ENCODE measurements at regions of chr18 and their contacts with region 1.

Region 1: DNA sequence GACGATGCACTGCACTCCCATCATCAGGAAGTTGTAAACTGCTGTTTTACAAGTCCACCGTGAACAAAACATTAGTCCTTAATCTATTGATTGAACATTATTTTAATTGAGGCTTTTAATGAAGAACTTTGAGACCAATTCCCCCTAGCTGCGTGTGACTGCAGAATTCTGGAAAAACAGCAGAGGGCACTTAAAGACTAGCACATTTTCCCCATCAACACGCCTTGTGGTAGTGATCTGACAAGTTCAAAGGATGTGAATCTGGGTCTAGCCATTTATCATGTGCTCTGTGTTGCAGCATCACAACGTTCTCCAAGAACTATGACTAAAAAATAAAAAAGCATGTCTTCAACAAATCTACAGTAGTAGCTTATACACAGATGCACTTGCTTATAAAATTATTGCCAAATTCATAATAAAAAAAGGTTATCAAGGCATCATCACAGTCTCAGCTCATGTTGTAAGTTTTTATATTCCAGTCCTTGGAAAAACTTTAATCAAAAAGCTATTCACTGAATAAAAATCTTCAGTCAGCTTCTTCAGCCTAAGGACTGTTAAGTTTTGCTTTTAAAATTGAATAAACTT is 35.8 kb downstream of the SKOR2 start:
- DNase-seq: peak; percentile 54
- H3K4me3 ChIP-seq: peak overlapping the region in 1 of 2 experiments; percentile 32; a peak in 1 of 4 replicates
- H3K27ac ChIP-seq: no peak overlapping the region
- H3K4me1 ChIP-seq: no peaks in the 10 kb centered on the region
- H3K27me3 ChIP-seq: no peaks in the 10 kb centered on the region
- CTCF ChIP-seq: peak; percentile 67
- EP300 ChIP-seq: no peak
- RAD21 ChIP-seq: peak; percentile 97

Region 2: GRCh38 chr18:47050468-47050867 is 165.2 kb before region 1 on chr18:
- CTCF ChIA-PET with region 1: interaction called, 12 read pairs
- POLR2A ChIA-PET with region 1: no interaction called
- DNase-seq: peak; percentile 42
- H3K4me3 ChIP-seq: no peak overlapping the region
- H3K27ac ChIP-seq: no peak overlapping the region
- H3K4me1 ChIP-seq: no peaks in the 10 kb centered on the region
- H3K27me3 ChIP-seq: no peaks in the 10 kb centered on the region
- CTCF ChIP-seq: peak; percentile 77
- EP300 ChIP-seq: no peak
- RAD21 ChIP-seq: peak; percentile 77

Region 3: DNA sequence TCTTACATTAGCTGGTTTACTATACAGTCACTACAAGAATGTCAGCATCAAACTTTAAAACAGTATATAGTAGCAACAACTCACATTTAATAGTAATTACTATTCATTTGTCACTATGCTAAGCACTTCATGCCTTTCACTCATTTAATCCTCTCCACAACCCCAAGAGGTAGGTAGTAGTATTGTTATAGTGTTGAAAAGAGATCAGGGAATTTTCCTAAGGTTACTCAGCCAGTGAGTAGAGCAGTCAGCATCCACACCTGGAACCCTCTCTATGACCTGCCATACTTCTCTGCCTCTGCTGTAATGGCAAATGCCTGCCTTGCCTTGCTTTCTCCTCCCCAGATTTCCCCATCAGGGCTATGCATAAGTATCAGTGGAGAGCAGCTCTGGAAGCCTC is 11.0 kb after region 1 on chr18:
- CTCF ChIA-PET with region 1: interaction called, 41 read pairs
- POLR2A ChIA-PET with region 1: no interaction called
- DNase-seq: no peak
- H3K4me3 ChIP-seq: no peak overlapping the region
- H3K27ac ChIP-seq: no peak overlapping the region
- H3K4me1 ChIP-seq: no peaks in the 10 kb centered on the region
- H3K27me3 ChIP-seq: no peaks in the 10 kb centered on the region; the same call in 1 of the 2 replicates
- CTCF ChIP-seq: no peak
- EP300 ChIP-seq: no peak
- RAD21 ChIP-seq: no peak

Region 4: GRCh38 chr18:47260120-47260923 is 44.7 kb after region 1 on chr18:
- CTCF ChIA-PET with region 1: interaction called, 19 read pairs
- POLR2A ChIA-PET with region 1: no interaction called
- DNase-seq: peak; percentile 78
- H3K4me3 ChIP-seq: no peak overlapping the region
- H3K27ac ChIP-seq: no peak overlapping the region
- H3K4me1 ChIP-seq: peaks cover 0 to 8% of the 10 kb centered on the region in 2 experiments; a peak in 1 of 4 replicates
- H3K27me3 ChIP-seq: peaks cover 30% of the 10 kb centered on the region; the same call in 1 of the 2 replicates
- CTCF ChIP-seq: no peak
- EP300 ChIP-seq: no peak
- RAD21 ChIP-seq: peak; percentile 12; the same call in 1 of the 2 replicates

Region 5: GRCh38 chr18:47748847-47749599 is 533.4 kb after region 1 on chr18:
- CTCF ChIA-PET with region 1: interaction called, 101 read pairs
- POLR2A ChIA-PET with region 1: no interaction called
- DNase-seq: peak; percentile 95
- H3K4me3 ChIP-seq: peak overlapping the region; percentile 42 to 72
- H3K27ac ChIP-seq: no peak overlapping the region
- H3K4me1 ChIP-seq: peaks cover 0 to 4% of the 10 kb centered on the region in 2 experiments; a peak in 1 of 4 replicates
- H3K27me3 ChIP-seq: no peaks in the 10 kb centered on the region
- CTCF ChIP-seq: peak; percentile 94
- EP300 ChIP-seq: no peak
- RAD21 ChIP-seq: peak; percentile 95